ENCODE measurements at regions of chr4 and their contacts with region 1.

Region 1: DNA sequence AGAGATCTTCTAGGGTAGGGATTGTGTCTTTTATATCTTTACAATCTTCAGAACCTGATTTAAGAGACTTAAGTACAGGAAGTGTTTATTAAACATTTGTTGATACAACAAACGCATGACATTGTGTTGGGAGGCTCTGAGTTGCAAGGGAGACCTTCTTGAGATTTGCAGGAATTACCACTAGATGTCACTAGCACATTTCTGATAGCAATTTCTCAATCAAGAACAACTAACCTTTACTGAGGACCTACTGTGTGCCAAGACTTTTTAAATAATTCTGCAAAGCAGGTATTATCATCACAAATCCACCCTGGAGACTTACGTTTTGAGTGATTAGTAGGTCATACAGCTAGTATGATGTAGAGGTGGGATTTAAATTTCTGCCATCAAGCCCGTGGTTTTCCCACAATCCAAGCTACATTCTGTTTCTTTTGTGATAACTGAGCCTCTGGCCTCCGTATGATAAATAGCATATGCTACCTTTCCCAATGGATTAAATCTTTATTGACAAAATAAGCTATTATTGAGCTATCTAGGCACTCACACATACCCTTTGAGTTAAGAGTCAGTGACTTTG is 986.0 kb downstream of the CCSER1 start:
- DNase-seq: peak; percentile 32
- ATAC-seq: 0 out of 2 replicates have a peak, but pooled peaks have one; percentile 48
- H3K4me3 ChIP-seq: no peak overlapping the region
- H3K27ac ChIP-seq: no peak overlapping the region
- H3K4me1 ChIP-seq: no peaks in the 10 kb centered on the region
- H3K27me3 ChIP-seq: no peaks in the 10 kb centered on the region
- CTCF ChIP-seq: peak; percentile 60; the same call in 1 of the 2 replicates

Region 2: DNA sequence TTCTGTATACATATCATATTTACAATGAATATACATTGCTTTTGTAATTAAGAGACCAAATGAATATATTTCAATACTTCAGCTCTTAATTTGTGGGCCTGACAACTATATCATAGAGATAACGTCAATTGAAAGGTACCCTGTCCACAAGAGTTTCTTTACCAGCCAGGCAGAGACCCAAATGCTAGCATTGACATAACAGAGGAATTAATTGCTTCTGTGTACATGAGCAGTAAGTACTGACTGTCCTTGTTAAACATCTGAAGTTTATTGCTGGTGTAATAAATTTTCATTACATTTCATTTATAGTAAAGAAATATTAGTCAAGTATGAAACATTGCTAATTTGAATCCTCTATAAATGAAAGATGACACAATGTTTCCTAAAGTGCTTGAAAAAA is 75.3 kb before region 1 on chr4:
- CTCF ChIA-PET with region 1: no interaction called
- POLR2A ChIA-PET with region 1: no interaction called
- in situ Hi-C with region 1: no loop called
- intact Hi-C with region 1: no loop called
- DNase-seq: no peak
- ATAC-seq: no peak
- H3K4me3 ChIP-seq: no peak overlapping the region
- H3K27ac ChIP-seq: no peak overlapping the region
- H3K4me1 ChIP-seq: no peaks in the 10 kb centered on the region
- H3K27me3 ChIP-seq: no peaks in the 10 kb centered on the region
- CTCF ChIP-seq: no peak

Region 3: DNA sequence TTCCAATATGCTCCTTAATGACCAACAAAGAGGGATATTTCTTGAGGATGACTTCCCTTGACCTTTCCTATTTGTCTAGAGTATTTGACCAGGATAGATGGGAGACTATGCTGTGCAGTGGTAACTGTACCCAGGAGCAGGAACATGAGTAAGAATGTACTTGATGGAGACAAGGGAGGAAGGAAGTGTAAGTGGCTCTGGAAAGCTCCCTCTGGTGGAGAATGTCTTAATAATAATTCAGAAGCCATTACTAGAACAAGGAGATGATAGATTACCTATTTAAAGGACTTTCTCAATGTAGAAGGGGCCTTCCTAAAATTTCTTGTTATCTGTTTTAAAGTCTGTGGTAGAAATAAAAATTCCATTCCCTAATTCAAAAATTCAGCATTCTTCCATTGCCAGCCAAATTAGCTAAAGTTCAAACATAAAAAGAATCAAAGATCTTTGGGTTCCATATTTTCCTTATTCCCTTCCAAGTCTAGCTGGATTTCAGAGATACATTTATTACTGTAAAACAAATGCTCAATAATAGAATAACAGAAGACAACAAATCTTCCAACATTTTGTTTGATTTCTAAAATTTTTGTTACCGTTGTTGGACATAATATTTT is 1274.3 kb after region 1 on chr4:
- CTCF ChIA-PET with region 1: no interaction called
- POLR2A ChIA-PET with region 1: no interaction called
- in situ Hi-C with region 1: no loop called
- intact Hi-C with region 1: loop called (anchors 5 kb)
- DNase-seq: peak; percentile 4
- ATAC-seq: no peak
- H3K4me3 ChIP-seq: no peak overlapping the region
- H3K27ac ChIP-seq: no peak overlapping the region
- H3K4me1 ChIP-seq: no peaks in the 10 kb centered on the region
- H3K27me3 ChIP-seq: no peaks in the 10 kb centered on the region
- CTCF ChIP-seq: peak; percentile 45; the same call in 1 of the 2 replicates

Measured in Panc1 (cell line).